ENCODE measurements at regions of chr10 and their contacts with region 1.

Region 1: GRCh38 chr10:30935078-30935477 is 96.6 kb downstream of the ZNF438 start:
- DNase-seq: no peak
- H3K4me3 ChIP-seq: no peak overlapping the region
- CTCF ChIP-seq: no peak
- POLR2A ChIP-seq: no peak

Region 2: DNA sequence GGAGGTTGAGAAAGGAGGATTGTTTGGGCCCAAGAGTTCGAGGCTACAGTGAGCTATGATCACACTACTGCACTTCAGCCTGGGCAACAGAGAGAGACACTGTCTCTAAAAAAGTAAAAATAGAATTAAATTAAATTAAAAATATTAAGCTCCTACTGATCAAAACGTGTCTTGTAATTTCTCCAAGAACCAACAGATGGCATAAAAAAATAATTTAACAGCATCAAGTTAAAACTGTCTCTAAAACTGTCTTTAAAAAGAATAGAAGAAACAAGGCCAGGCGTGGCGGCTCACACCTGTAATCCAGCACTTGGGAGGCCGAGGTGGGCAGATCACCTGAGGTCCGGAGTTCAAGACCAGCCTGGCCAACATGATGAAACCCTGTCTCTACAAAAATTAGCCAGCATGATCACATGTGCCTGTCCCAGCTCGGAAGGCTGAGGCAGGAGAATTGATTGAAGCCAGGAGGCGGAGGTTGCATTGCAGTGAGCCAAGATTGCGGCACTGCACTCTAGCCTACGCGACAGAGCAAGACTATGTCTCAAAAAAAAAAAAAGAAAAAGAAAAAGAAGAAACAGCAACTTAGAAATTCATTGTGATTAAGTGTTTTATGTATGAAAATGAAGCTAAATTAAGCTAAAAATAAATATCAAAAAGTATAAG is 610.5 kb before region 1 on chr10:
- intact Hi-C with region 1: loop called (anchors 5 kb)
- DNase-seq: no peak
- H3K4me3 ChIP-seq: no peak overlapping the region
- CTCF ChIP-seq: no peak
- POLR2A ChIP-seq: no peak